CD8-positive, alpha-beta memory T cell (primary cell): ENCODE measurements at regions of chr2 and their contacts with region 1.

Region 1: GRCh38 chr2:237512774-237513466 is 25.9 kb downstream of the MLPH start:
- DNase-seq: peak; percentile 53 to 81 (median 57)
- H3K4me3 ChIP-seq: no peak overlapping the region
- H3K4me3 Mint-ChIP-seq: no peak overlapping the region
- H3K27ac ChIP-seq: no peak overlapping the region
- H3K27ac Mint-ChIP-seq: no peak overlapping the region
- H3K4me1 ChIP-seq: no peaks in the 10 kb centered on the region
- H3K4me1 Mint-ChIP-seq: no peaks in the 10 kb centered on the region
- H3K27me3 ChIP-seq: no peaks in the 10 kb centered on the region
- H3K27me3 Mint-ChIP-seq: peaks cover 4 to 13% of the 10 kb centered on the region in 2 donors

Region 2: GRCh38 chr2:237486819-237487444 is 26.0 kb before region 1 on chr2 and contains the start of gene MLPH:
- CTCF ChIA-PET with region 1: no interaction called
- POLR2A ChIA-PET with region 1: no interaction called
- DNase-seq: no peak
- H3K4me3 ChIP-seq: no peak within 1 kb of the TSS
- H3K4me3 Mint-ChIP-seq: no peak within 1 kb of the TSS
- H3K27ac ChIP-seq: no peak within 1 kb of the TSS
- H3K27ac Mint-ChIP-seq: no peak within 1 kb of the TSS
- H3K4me1 ChIP-seq: no peaks in the 10 kb centered on the region
- H3K4me1 Mint-ChIP-seq: no peaks in the 10 kb centered on the region
- H3K27me3 ChIP-seq: peaks cover 9% of the 10 kb centered on the region
- H3K27me3 Mint-ChIP-seq: peaks cover 29 to 67% of the 10 kb centered on the region in 2 donors
- total RNA-seq, gene MLPH: not detected

Region 3: DNA sequence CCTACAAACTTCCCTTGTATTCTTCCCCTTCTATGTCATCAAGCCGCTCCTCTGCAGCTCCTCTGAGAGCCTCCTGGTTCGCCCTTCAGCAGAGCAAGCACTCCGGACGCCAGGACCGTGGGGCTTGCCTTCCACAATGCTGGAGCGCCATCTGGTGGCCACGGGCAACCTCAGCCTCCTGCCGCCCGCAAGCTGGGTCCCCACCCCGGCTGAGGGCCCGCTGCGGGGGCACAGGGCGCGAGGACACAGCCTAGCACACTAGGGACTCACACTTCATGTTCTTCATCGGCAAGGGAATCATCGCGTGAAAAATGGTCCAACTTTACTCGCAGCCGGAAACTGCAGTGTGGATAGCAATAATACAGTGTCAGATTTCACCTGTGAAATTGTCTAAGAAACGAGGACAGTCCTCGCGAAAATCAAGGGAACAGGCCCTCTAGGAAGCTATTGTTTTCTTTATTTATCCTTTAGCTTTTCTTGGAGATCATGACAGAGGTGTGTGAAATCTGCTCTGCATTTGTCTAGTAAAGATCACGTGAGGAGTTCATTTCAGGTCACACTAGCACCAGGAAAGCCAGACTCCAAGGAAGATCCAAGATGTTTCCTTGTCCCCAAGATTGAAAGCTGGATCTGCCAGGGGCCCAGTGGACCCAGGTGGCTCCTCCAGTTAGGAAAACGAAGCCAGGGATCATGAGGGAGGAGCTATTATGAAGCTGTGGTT is 59.3 kb after region 1 on chr2:
- CTCF ChIA-PET with region 1: interaction called, 55 read pairs
- POLR2A ChIA-PET with region 1: no interaction called
- DNase-seq: peak; percentile 68 to 82 (median 77)
- H3K4me3 ChIP-seq: no peak overlapping the region
- H3K4me3 Mint-ChIP-seq: no peak overlapping the region
- H3K27ac ChIP-seq: no peak overlapping the region
- H3K27ac Mint-ChIP-seq: peak overlapping the region in 1 of 8 donors; percentile 17
- H3K4me1 ChIP-seq: peaks cover 6% of the 10 kb centered on the region
- H3K4me1 Mint-ChIP-seq: peaks cover 0 to 5% (median 5%) of the 10 kb centered on the region in 3 donors
- H3K27me3 ChIP-seq: no peaks in the 10 kb centered on the region
- H3K27me3 Mint-ChIP-seq: peaks cover 14 to 25% of the 10 kb centered on the region in 2 donors

Region 4: GRCh38 chr2:237744613-237745249 is 231.8 kb after region 1 on chr2:
- CTCF ChIA-PET with region 1: interaction called, 13 read pairs
- POLR2A ChIA-PET with region 1: no interaction called
- DNase-seq: peak; percentile 62 to 84 (median 72)
- H3K4me3 ChIP-seq: no peak overlapping the region
- H3K4me3 Mint-ChIP-seq: no peak overlapping the region
- H3K27ac ChIP-seq: no peak overlapping the region
- H3K27ac Mint-ChIP-seq: peak overlapping the region; percentile 47 to 92 (median 82)
- H3K4me1 ChIP-seq: no peaks in the 10 kb centered on the region
- H3K4me1 Mint-ChIP-seq: peaks cover 37 to 64% (median 45%) of the 10 kb centered on the region in 3 donors
- H3K27me3 ChIP-seq: no peaks in the 10 kb centered on the region
- H3K27me3 Mint-ChIP-seq: no peaks in the 10 kb centered on the region

Region 5: DNA sequence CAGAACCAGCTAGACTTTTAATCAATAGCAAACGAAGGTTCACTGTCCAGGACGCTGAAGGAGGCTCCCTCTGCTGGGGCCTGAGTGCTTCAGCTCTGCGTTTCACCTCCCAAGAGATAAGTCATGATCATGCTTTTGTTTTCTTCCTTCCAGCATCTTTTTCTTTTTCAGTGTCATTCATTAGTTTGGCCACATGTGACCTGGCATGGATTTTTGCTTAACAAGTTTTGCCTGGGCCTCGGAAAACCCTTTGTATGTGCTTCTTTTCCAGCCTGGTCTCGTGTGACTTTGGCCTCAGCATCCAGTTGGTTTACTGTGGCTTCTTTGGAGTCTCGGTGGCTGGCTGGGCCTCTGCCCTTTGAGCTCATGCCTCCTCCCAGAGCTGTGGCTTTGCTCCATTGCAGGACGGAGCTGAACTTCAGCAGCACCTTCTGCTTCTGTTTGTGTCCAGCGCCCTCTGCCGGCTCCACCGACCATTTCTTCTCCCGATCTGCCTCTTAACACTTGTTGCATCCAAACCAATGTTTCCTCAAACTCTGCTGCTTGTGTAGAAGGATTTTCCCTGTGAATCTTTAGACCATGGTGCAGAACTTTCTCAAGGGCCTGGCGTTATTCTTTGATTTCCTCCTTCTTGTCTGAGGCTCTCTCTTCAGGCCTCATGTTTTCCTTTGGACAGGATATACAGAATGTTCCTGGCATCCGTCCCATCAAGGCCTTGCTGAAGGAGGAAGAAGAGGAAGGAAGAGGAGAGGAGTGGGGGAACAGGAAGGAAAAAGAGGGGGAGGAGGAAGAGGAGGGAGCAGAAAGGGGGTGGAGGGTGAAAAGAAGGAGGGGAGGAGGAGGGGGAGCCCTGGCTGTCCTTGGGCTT is 750.5 kb after region 1 on chr2:
- CTCF ChIA-PET with region 1: interaction called, 10 read pairs
- POLR2A ChIA-PET with region 1: no interaction called
- DNase-seq: peak; percentile 52 to 81 (median 59)
- H3K4me3 ChIP-seq: no peak overlapping the region
- H3K4me3 Mint-ChIP-seq: peak overlapping the region in 1 of 7 donors; percentile 38
- H3K27ac ChIP-seq: no peak overlapping the region
- H3K27ac Mint-ChIP-seq: peak overlapping the region in 2 of 8 donors; percentile 2 to 71
- H3K4me1 ChIP-seq: no peaks in the 10 kb centered on the region
- H3K4me1 Mint-ChIP-seq: peaks cover 4 to 6% (median 5%) of the 10 kb centered on the region in 3 donors
- H3K27me3 ChIP-seq: no peaks in the 10 kb centered on the region
- H3K27me3 Mint-ChIP-seq: no peaks in the 10 kb centered on the region